ENCODE measurements at regions of chr20 and their contacts with region 1.

Region 1: DNA sequence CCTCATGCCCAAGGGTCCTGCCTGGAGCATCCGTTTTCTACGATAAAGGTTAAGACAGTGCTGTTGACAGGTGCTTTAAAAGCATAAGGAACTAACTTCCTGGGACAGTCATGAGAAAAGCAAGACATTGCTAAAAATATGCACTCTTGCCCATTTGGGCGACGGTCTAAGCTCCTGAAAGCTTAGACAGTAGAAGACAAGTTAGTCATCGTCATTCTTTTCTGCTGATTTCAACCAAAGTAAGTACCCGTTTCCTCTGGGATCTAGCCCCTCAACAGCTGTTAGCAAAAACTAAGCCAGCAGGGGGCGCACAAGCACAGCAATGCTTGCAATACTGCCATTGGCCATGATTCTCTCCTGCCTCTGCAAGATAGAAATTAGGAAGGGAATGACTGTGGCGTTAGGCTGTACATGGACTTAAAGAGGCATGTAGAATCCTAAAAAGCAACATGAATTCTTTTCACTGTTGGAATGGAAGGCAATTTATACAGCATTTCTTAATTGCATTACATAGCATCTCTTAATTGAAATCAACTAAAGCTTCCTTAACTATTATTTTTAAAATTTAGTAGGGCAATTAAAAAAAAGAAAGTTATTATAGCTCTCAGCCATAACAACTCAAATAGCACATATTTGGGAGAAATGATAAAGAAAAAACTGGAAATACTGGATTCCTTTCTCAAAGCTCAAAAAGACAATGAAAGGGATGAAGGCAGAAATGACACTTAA is 147.8 kb upstream of the RALGAPA2 start:
- DNase-seq: peak; percentile 86 to 92
- ATAC-seq: peak; percentile 70 to 94 (median 84)
- H3K4me3 ChIP-seq: no peak overlapping the region
- H3K27ac ChIP-seq: no peak overlapping the region
- H3K4me1 ChIP-seq: no peaks in the 10 kb centered on the region
- H3K27me3 ChIP-seq: no peaks in the 10 kb centered on the region
- CTCF ChIP-seq: peak; percentile 94

Region 2: GRCh38 chr20:21125849-21126580 is 265.8 kb after region 1 on chr20 and contains the start of gene KIZ:
- intact Hi-C with region 1: loop called in 1 of 2 experiments (anchors 10 kb)
- DNase-seq: peak; percentile 97 to 99
- ATAC-seq: peak; percentile 98 to 99 (median 98)
- H3K4me3 ChIP-seq: peak within 1 kb of the TSS; percentile 91
- H3K27ac ChIP-seq: peak within 1 kb of the TSS; percentile 91
- H3K4me1 ChIP-seq: peaks cover 12% of the 10 kb centered on the region
- H3K27me3 ChIP-seq: no peaks in the 10 kb centered on the region
- CTCF ChIP-seq: peak; percentile 45
- total RNA-seq, gene KIZ: 18.6 to 26.2 (median 22.7) TPM

Region 3: DNA sequence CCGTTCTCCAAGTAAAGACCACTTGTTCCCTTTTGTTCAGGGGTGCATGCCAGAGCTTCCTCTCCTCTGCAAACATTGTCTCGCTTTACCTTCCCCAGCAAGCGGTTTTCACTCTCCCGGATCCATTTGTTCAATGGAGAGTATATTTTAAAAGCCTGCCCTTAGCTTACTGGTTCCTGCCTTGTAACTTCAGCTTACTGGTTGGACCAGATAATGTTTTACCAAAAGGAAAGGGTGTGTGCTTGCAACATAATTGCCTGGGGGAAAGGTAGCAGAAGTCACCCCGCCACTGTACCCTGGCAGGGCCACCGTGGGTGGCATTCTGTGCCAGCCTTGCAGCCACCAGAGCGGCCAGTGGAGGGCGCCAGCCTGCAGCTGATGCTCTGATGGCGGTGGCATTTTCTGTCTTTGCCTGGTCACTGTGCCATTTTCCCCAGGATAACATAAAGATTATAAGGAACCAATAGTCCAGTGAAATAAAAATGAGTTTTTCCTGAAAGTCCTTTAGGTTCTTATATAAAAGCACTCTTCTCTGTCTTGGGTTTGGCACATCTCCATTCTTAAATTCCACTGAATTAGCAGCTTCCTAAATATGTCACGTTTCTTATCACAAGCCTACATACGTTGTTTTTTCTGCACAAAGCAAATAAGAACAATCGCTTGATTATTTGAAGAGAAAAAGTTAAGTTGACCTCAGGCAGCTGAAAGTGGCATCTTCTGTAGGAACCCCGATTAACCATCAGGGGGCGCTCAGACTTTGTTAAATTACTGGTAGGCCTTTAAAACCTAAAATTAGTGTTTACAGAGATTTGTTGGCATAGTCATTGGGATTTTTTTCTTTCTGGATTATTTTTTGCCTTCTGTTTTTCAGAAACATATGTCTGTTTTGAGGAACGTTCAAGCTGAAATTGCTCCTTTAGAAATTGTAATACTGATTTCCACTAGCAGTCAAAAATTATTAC is 375.5 kb after region 1 on chr20:
- intact Hi-C with region 1: loop called in 1 of 2 experiments (anchors 5 kb)
- DNase-seq: peak; percentile 37 to 74
- ATAC-seq: peak; percentile 68 to 90 (median 86)
- H3K4me3 ChIP-seq: no peak overlapping the region
- H3K27ac ChIP-seq: no peak overlapping the region
- H3K4me1 ChIP-seq: no peaks in the 10 kb centered on the region
- H3K27me3 ChIP-seq: no peaks in the 10 kb centered on the region
- CTCF ChIP-seq: peak; percentile 60

Region 4: GRCh38 chr20:21505161-21505809 is 645.0 kb after region 1 on chr20:
- intact Hi-C with region 1: loop called (anchors 1 to 5 kb)
- DNase-seq: peak; percentile 58 to 77
- ATAC-seq: peak; percentile 77 to 86 (median 84)
- H3K4me3 ChIP-seq: peak overlapping the region; percentile 62
- H3K27ac ChIP-seq: no peak overlapping the region
- H3K4me1 ChIP-seq: peaks cover 21% of the 10 kb centered on the region
- H3K27me3 ChIP-seq: peaks cover 4 to 88% (median 57%) of the 10 kb centered on the region in 3 donors
- CTCF ChIP-seq: peak; percentile 97

Region 5: DNA sequence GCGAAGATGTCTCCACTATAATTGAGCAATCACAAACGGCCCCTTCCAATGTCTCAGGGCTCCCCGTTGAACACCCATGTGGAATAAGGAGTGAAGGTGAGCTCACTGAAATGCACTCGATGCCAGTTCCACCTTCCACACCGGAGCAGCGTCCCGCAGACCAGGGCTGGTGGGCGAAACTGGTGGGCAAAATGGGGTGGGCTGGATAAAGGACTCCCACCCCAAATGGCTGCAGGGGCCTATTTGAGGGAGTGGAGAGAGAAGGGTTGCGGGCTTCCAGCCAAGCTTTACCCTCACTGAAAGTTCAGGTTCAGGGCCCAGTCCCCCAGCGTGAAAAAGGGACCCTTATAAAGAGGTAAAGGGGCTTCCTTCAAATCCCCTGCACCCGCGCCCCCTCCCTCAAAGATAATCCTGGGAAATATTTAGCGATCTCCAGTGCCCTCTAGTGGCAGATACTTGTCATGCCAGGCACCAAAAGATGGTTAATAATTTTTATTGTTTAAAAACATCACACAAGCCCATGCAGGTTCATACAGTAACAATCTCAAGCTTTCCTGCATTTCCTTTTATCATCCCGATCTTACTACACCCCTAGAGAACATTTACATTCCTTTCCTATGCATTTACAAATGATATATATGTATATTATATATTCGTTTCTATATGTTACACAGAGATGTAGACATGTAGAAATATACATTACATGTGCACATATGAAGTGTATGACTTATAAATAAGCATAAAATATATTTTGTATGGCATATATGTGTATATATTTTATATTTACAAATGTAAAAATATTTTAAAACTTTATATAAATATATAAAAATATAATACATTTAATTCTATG is 711.8 kb after region 1 on chr20:
- intact Hi-C with region 1: loop called in 1 of 2 experiments (anchors 5 kb)
- DNase-seq: no peak
- ATAC-seq: no peak
- H3K4me3 ChIP-seq: no peak overlapping the region
- H3K27ac ChIP-seq: no peak overlapping the region
- H3K4me1 ChIP-seq: no peaks in the 10 kb centered on the region
- H3K27me3 ChIP-seq: peaks cover 0 to 5% (median 0%) of the 10 kb centered on the region in 3 donors
- CTCF ChIP-seq: peak; percentile 87

Region 6: GRCh38 chr20:22288957-22289356 is 1428.7 kb after region 1 on chr20:
- intact Hi-C with region 1: no loop called
- DNase-seq: no peak
- ATAC-seq: no peak
- H3K4me3 ChIP-seq: no peak overlapping the region
- H3K27ac ChIP-seq: no peak overlapping the region
- H3K4me1 ChIP-seq: no peaks in the 10 kb centered on the region
- H3K27me3 ChIP-seq: no peaks in the 10 kb centered on the region
- CTCF ChIP-seq: no peak

Measured in psoas muscle (tissue), 8 donors.